ENCODE measurements at regions of chr5 and their contacts with region 1.

Region 1: GRCh38 chr5:60944904-60945812 is at the starts of genes ERCC8 and NDUFAF2:
- DNase-seq: peak; percentile 94
- ATAC-seq: peak; percentile 99
- H3K4me3 Mint-ChIP-seq: no peak within 1 kb of the TSS
- H3K27ac Mint-ChIP-seq: no peak within 1 kb of the TSS
- H3K4me1 Mint-ChIP-seq: peaks cover 25% of the 10 kb centered on the region
- H3K27me3 Mint-ChIP-seq: no peaks in the 10 kb centered on the region
- CTCF ChIP-seq: no peak
- total RNA-seq, gene ERCC8: 10.8 to 11.7 TPM
- total RNA-seq, gene NDUFAF2: 41.2 to 46.6 TPM

Region 2: GRCh38 chr5:60677844-60678664 is 267.1 kb before region 1 on chr5:
- CTCF ChIA-PET with region 1: no interaction called
- POLR2A ChIA-PET with region 1: no interaction called
- intact Hi-C with region 1: loop called (anchors 10 kb)
- DNase-seq: no peak
- ATAC-seq: no peak
- H3K4me3 Mint-ChIP-seq: no peak overlapping the region
- H3K27ac Mint-ChIP-seq: no peak overlapping the region
- H3K4me1 Mint-ChIP-seq: no peaks in the 10 kb centered on the region
- H3K27me3 Mint-ChIP-seq: no peaks in the 10 kb centered on the region
- CTCF ChIP-seq: peak; percentile 59

Region 3: GRCh38 chr5:60960591-60960990 is 15.4 kb after region 1 on chr5:
- CTCF ChIA-PET with region 1: interaction called, 11 read pairs
- POLR2A ChIA-PET with region 1: interaction called, 3 read pairs
- intact Hi-C with region 1: no loop called
- DNase-seq: peak; percentile 20
- ATAC-seq: no peak
- H3K4me3 Mint-ChIP-seq: no peak overlapping the region
- H3K27ac Mint-ChIP-seq: no peak overlapping the region
- H3K4me1 Mint-ChIP-seq: peaks cover 14% of the 10 kb centered on the region
- H3K27me3 Mint-ChIP-seq: no peaks in the 10 kb centered on the region
- CTCF ChIP-seq: peak; percentile 68

Measured in activated CD8-positive, alpha-beta T cell treated with anti-CD3 and anti-CD28 coated beads for 36 hours (primary cell).